Activated CD4-positive, alpha-beta T cell treated with anti-CD3 and anti-CD28 coated beads, Interleukin-2, amount 10 ng/mL, durations not matched to agents 24 days and 14 days (primary cell): ENCODE measurements at regions of chr15 and their contacts with region 1.

Region 1: GRCh38 chr15:35751413-35752133 is 205.6 kb upstream of the DPH6 start:
- DNase-seq: peak; percentile 80
- H3K4me3 Mint-ChIP-seq: no peak overlapping the region
- H3K27ac Mint-ChIP-seq: no peak overlapping the region
- H3K4me1 Mint-ChIP-seq: no peaks in the 10 kb centered on the region
- H3K27me3 Mint-ChIP-seq: no peaks in the 10 kb centered on the region

Region 2: DNA sequence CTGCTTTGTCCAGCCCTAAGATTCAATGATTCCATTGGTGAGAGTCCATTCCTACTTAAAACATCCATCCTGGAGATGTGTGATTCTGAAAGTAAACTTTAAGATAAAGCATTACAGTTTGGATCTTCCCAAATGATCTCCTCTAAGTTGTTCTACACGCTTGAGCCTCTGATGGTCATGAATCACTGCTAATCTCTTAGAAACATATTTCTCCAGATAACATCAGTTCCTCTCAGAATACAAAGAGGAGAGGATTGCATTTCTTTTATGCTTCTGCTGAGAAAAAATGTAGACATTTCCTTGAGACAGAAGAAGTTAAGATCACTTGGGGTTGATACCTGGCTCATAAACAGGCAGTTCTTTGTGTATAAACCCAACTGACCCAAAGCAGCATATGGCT is 75.6 kb after region 1 on chr15:
- intact Hi-C with region 1: no loop called
- DNase-seq: no peak
- H3K4me3 Mint-ChIP-seq: no peak overlapping the region
- H3K27ac Mint-ChIP-seq: no peak overlapping the region
- H3K4me1 Mint-ChIP-seq: no peaks in the 10 kb centered on the region
- H3K27me3 Mint-ChIP-seq: no peaks in the 10 kb centered on the region

Region 3: GRCh38 chr15:37134699-37135131 is 1383.1 kb after region 1 on chr15:
- intact Hi-C with region 1: loop called (anchors 10 kb)
- DNase-seq: no peak
- H3K4me3 Mint-ChIP-seq: no peak overlapping the region
- H3K27ac Mint-ChIP-seq: no peak overlapping the region
- H3K4me1 Mint-ChIP-seq: no peaks in the 10 kb centered on the region
- H3K27me3 Mint-ChIP-seq: peaks cover 5% of the 10 kb centered on the region